Ascending aorta (tissue), 2 donors: ENCODE measurements at regions of chr10 and their contacts with region 1.

Region 1: GRCh38 chr10:67779465-67780203 is 58.4 kb downstream of the DNAJC12 start:
- DNase-seq: peak in 1 of 2 donors; percentile 82
- H3K4me3 ChIP-seq: no peak overlapping the region
- H3K27ac ChIP-seq: no peak overlapping the region
- H3K4me1 ChIP-seq: no peaks in the 10 kb centered on the region
- H3K27me3 ChIP-seq: no peaks in the 10 kb centered on the region
- CTCF ChIP-seq: peak; percentile 62 to 92 (median 76)

Region 2: DNA sequence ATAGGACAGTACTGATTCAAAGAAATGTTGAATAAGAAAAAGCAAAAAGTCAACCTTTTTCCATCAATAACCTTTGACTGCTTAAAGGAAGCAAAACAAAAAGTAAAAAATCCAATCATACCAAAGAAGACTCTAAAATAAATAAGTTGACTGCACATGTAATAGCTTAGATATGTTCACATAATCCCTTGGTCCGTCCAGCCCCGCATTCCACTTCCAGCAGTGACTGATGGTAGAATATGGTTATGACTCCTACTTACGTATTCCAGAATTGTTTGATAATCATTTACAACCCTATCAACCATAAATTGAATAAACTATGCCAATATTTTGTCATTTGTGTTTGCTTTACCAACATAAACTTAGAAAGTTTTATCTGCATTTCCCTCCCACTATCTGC is 161.5 kb before region 1 on chr10:
- intact Hi-C with region 1: no loop called
- DNase-seq: no peak
- H3K4me3 ChIP-seq: no peak overlapping the region
- H3K27ac ChIP-seq: no peak overlapping the region
- H3K4me1 ChIP-seq: no peaks in the 10 kb centered on the region
- H3K27me3 ChIP-seq: no peaks in the 10 kb centered on the region
- CTCF ChIP-seq: no peak

Region 3: DNA sequence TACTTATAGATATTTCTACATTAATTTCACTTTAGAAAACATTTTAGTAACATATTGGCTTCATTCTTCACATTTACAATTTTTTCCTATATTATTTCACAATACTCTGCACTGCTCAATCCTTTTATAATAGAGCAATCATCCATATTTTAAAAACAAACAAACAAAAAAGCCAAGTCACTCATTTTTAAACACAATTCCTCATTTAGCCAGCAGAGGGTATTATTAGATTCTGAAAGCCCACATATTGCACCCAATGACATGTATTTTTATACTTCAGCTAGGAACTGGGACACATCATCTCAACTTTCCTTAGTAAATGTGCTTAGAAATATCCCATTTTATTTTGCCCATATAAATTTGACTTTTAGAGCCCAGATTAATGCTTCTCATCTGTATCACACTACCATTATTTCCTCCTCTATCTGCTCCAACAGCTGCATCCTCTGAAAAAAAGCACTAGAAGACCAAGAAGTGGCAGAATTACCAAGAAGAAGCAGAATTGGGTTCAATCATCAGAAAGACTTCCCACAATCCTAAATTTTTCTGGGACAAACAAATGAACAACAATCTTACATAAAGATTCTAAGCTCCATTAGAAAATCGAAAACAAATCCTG is 113.1 kb before region 1 on chr10:
- intact Hi-C with region 1: loop called (anchors 2 kb)
- DNase-seq: no peak
- H3K4me3 ChIP-seq: no peak overlapping the region
- H3K27ac ChIP-seq: peak overlapping the region in 1 of 2 donors; percentile 1
- H3K4me1 ChIP-seq: no peaks in the 10 kb centered on the region
- H3K27me3 ChIP-seq: no peaks in the 10 kb centered on the region
- CTCF ChIP-seq: peak in 2 of 3 experiments; percentile 49 to 56

Region 4: DNA sequence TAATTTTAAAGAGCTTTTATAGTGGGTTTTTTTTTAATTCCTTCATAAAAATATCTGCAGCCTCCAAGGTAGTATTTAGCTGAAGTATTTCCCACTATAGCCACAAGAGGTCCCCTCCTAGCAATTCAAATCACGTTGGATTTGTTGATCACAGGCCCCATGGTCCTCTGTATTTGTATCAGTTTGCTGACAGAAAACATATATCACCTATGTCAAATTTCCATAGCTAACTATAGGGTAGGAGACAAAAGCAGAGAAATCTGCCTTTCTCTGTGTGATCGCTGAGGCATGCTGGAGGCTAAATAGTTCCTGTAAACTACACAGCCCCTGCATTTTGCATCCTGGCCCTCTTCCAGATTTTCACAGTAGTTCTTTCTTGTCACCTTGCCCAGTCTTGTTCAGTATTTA is 81.9 kb before region 1 on chr10:
- intact Hi-C with region 1: loop called (anchors 1 kb)
- DNase-seq: no peak
- H3K4me3 ChIP-seq: no peak overlapping the region
- H3K27ac ChIP-seq: no peak overlapping the region
- H3K4me1 ChIP-seq: peaks cover 0 to 4% of the 10 kb centered on the region in 2 donors
- H3K27me3 ChIP-seq: no peaks in the 10 kb centered on the region
- CTCF ChIP-seq: peak; percentile 26 to 68 (median 52)